ENCODE measurements at regions of chr6 and their contacts with region 1.

Region 1: DNA sequence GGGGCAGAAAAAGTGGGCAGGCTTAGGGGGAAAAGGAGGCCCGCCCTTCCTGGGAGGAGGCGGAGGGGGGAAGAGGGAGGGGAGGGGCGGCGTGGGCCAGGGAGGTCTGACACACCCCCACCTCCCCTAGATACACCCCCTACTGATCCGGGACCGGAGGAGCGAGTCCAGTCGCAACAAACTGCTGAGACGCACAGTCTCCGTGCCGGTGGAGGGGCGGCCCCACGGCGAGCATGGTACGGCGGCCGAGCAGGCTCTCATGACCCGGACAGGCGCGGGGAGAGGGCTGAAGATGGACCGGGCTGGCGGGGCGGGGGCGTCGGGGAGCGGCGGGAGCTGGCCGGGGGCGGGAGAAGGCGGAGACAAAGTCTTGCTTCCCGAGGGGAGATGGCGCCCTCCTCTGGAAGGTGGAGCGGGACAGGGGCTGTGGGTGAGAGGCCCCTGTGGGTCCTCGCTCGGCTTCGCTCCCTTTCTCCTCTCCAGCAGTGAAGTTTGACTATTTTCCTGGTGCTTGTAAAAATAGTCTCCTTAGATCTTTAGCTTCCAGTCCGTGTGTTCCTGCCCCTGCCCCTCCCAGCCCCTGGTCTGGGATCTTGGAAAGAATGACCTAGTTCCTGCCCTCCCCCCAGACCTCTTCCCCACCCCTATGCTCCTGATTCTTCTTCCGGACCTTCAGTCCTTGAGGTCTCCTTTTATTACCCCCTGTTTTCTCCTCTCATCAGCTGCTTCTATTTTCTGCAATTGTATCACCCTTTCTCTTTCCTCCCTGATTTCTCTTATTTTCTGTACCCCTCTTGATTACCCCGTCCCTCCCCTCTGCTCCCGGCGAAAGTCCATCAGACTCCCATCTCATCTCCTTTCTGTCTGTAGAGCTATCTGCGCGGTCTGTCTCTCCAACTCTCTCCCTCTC is 6.1 kb downstream of the SYNGAP1 start:
- DNase-seq: peak; percentile 83 to 90
- ATAC-seq: peak; percentile 68 to 87
- H3K4me3 ChIP-seq: peak overlapping the region; percentile 69
- H3K27ac ChIP-seq: peak overlapping the region; percentile 89 to 98
- H3K4me1 ChIP-seq: peaks cover 37% of the 10 kb centered on the region
- CTCF ChIP-seq: peak; percentile 64
- EP300 ChIP-seq: no peak
- POLR2A ChIP-seq: peak; percentile 33
- RAD21 ChIP-seq: peak; percentile 63 to 75

Region 2: GRCh38 chr6:33091957-33092356 is 334.0 kb before region 1 on chr6:
- CTCF ChIA-PET with region 1: no interaction called
- POLR2A ChIA-PET with region 1: no interaction called
- DNase-seq: peak in 1 of 2 experiments; percentile 15
- ATAC-seq: peak; percentile 66 to 76; a peak in 3 of 6 replicates
- H3K4me3 ChIP-seq: no peak overlapping the region
- H3K27ac ChIP-seq: no peak overlapping the region
- H3K4me1 ChIP-seq: no peaks in the 10 kb centered on the region
- CTCF ChIP-seq: no peak
- EP300 ChIP-seq: no peak
- POLR2A ChIP-seq: no peak
- RAD21 ChIP-seq: peak in 1 of 2 experiments; percentile 17; a peak in 1 of 5 replicates

Region 3: GRCh38 chr6:33384581-33385020 is 41.3 kb before region 1 on chr6:
- CTCF ChIA-PET with region 1: interaction called, 24 read pairs
- POLR2A ChIA-PET with region 1: no interaction called
- DNase-seq: peak; percentile 64 to 69
- ATAC-seq: peak; percentile 84 to 91
- H3K4me3 ChIP-seq: no peak overlapping the region
- H3K27ac ChIP-seq: no peak overlapping the region
- H3K4me1 ChIP-seq: no peaks in the 10 kb centered on the region
- CTCF ChIP-seq: peak; percentile 37
- EP300 ChIP-seq: no peak
- POLR2A ChIP-seq: no peak
- RAD21 ChIP-seq: peak in 1 of 2 experiments; percentile 21; a peak in 1 of 5 replicates

Region 4: GRCh38 chr6:33391278-33391921 is 34.5 kb before region 1 on chr6 and contains the start of gene KIFC1:
- CTCF ChIA-PET with region 1: interaction called, 24 read pairs
- POLR2A ChIA-PET with region 1: interaction called, 3 read pairs
- DNase-seq: peak; percentile 92 to 99
- ATAC-seq: peak; percentile 98
- H3K4me3 ChIP-seq: peak within 1 kb of the TSS; percentile 81
- H3K27ac ChIP-seq: peak within 1 kb of the TSS; percentile 82 to 94
- H3K4me1 ChIP-seq: peaks cover 31% of the 10 kb centered on the region
- CTCF ChIP-seq: peak; percentile 75
- EP300 ChIP-seq: no peak
- POLR2A ChIP-seq: no peak; the same call in 1 of the 2 replicates
- RAD21 ChIP-seq: peak; percentile 36 to 52
- polyA plus RNA-seq, gene KIFC1: 23.0 and 23.9 TPM in 2 replicates

Region 5: DNA sequence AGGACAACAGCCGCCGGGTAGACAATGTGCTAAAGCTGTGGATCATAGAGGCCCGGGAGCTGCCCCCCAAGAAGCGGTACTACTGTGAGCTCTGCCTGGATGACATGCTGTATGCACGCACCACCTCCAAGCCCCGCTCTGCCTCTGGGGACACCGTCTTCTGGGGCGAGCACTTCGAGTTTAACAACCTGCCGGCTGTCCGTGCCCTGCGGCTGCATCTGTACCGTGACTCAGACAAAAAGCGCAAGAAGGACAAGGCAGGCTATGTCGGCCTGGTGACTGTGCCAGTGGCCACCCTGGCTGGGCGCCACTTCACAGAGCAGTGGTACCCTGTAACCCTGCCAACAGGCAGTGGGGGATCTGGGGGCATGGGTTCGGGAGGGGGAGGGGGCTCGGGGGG is 11.7 kb after region 1 on chr6:
- CTCF ChIA-PET with region 1: interaction called, 11 read pairs
- POLR2A ChIA-PET with region 1: interaction called, 3 read pairs
- DNase-seq: no peak
- ATAC-seq: no peak
- H3K4me3 ChIP-seq: no peak overlapping the region
- H3K27ac ChIP-seq: no peak overlapping the region
- H3K4me1 ChIP-seq: no peaks in the 10 kb centered on the region
- CTCF ChIP-seq: no peak
- EP300 ChIP-seq: no peak
- POLR2A ChIP-seq: no peak
- RAD21 ChIP-seq: no peak

Region 6: GRCh38 chr6:33454009-33454946 is 28.4 kb after region 1 on chr6 and contains the start of gene ZBTB9:
- CTCF ChIA-PET with region 1: interaction called, 12 read pairs
- POLR2A ChIA-PET with region 1: interaction called, 11 read pairs
- DNase-seq: peak; percentile 93 to 95
- ATAC-seq: peak; percentile 98 to 100
- H3K4me3 ChIP-seq: peak within 1 kb of the TSS; percentile 97
- H3K27ac ChIP-seq: peak within 1 kb of the TSS; percentile 93 to 95
- H3K4me1 ChIP-seq: peaks cover 10% of the 10 kb centered on the region; the same call in 2 of the 3 replicates
- CTCF ChIP-seq: no peak
- EP300 ChIP-seq: no peak
- POLR2A ChIP-seq: peak; percentile 71
- RAD21 ChIP-seq: no peak
- polyA plus RNA-seq, gene ZBTB9: 6.9 and 9.5 TPM in 2 replicates

Region 7: DNA sequence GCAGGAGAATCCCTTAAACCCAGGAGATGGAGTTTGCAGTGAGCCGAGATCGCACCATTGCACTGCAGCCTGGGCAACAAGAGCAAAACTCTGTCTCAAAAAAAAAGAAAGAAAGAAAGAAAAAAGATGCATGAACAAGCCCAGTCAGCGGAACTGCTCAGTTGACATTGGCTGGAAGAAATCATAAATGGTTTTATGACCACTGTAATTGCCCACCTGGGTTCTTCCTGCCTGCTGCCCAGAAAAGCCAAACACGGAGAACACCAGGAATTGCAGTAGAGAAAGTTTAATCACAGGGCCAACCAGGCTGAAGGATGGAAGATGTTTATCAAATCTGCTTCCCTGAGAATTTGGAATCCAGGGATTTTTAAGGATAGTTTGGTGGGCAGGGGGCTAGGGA is 131.5 kb after region 1 on chr6:
- CTCF ChIA-PET with region 1: no interaction called
- POLR2A ChIA-PET with region 1: no interaction called
- DNase-seq: no peak
- ATAC-seq: no peak
- H3K4me3 ChIP-seq: no peak overlapping the region
- H3K27ac ChIP-seq: no peak overlapping the region
- H3K4me1 ChIP-seq: 0 out of 3 replicates have a peak, but pooled peaks cover 3% of the 10 kb centered on the region
- CTCF ChIP-seq: no peak
- EP300 ChIP-seq: no peak
- POLR2A ChIP-seq: no peak
- RAD21 ChIP-seq: no peak

Region 8: DNA sequence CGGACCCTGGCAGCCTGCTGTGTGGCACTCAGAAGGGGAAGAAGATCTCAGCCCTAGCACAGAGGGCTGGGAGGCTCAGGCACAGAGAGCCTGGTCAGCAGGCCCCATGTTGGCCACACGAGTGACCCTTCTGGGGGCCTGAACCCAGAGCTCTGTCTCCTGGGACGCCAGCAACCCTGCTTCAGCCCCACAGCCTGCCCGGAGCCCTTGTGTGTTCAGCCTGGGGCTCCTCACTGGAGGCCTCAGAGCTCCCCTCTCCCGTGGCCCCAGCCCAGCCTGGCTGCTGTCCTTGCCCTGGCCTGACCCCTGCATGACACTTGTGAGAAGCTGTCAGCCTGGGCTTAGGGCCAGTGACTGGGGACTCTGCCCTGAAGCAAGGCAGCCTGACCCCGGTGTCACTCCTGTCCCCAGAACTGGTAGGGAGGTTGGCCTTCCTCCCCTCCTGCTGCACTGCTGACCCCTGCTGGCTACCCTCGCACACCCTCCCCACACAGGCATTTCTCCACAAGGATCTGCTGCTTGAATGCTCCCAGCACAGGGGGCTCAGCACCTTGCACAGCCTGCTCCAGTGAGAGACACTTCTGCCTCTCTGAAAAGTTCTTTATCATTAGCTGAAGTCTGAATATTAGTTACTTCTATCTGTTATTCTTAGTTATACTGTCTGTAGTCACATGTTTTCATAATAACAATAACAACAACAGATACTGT is 336.2 kb after region 1 on chr6:
- CTCF ChIA-PET with region 1: no interaction called
- POLR2A ChIA-PET with region 1: no interaction called
- DNase-seq: peak; percentile 40 to 59
- ATAC-seq: peak; percentile 86 to 93
- H3K4me3 ChIP-seq: no peak overlapping the region
- H3K27ac ChIP-seq: peak overlapping the region; percentile 63 to 65; a peak in 4 of 6 replicates
- H3K4me1 ChIP-seq: peaks cover 27% of the 10 kb centered on the region
- CTCF ChIP-seq: peak; percentile 64
- EP300 ChIP-seq: no peak
- POLR2A ChIP-seq: no peak
- RAD21 ChIP-seq: peak; percentile 69 to 77

Region 9: DNA sequence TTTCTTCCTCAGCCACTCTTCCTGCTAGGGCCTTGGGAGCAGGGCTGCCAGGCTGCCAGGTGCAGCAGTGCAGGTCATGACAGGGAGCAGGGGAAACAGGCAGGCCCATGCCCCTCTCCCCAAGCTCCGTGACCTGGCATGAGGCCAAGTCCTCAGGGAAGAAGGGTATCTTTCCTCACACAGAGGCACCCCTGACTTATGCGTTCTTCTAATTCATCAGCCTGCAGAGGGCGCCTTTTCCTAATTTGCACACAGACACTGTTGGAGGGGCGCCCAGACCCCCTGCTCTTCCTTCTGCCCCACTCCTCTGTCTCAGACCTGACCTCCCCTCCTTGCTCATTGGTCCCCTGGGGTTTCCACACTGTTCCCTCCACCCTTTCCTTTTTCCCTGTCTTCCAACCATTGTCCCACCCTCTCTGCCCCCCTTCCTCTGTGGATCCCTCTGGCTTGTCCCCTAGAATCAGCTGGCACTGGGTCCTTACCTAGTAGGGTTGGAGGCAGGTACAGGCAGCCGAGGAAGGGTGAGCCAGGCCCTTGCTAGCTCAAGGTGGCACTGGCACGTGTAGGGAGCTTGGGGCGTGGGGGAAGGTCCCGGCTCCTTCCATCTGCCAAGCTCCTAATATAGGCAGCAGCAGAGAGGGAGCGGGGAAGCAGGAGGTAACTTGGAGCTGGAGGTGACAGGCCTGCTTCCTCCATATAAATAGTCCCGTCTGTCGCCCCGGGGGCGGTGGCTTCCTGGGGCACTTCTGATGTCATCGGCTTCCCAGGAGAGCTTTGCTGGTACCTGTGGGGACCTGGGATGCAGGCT is 532.8 kb after region 1 on chr6:
- CTCF ChIA-PET with region 1: no interaction called
- POLR2A ChIA-PET with region 1: no interaction called
- DNase-seq: no peak
- ATAC-seq: peak in 1 of 2 experiments; percentile 55; a peak in 2 of 6 replicates
- H3K4me3 ChIP-seq: no peak overlapping the region
- H3K27ac ChIP-seq: no peak overlapping the region
- H3K4me1 ChIP-seq: no peaks in the 10 kb centered on the region
- CTCF ChIP-seq: peak; percentile 23; the same call in 1 of the 3 replicates
- EP300 ChIP-seq: no peak
- POLR2A ChIP-seq: no peak
- RAD21 ChIP-seq: no peak